H1 (cell line): ENCODE measurements at regions of chr20 and their contacts with region 1.

Region 1: DNA sequence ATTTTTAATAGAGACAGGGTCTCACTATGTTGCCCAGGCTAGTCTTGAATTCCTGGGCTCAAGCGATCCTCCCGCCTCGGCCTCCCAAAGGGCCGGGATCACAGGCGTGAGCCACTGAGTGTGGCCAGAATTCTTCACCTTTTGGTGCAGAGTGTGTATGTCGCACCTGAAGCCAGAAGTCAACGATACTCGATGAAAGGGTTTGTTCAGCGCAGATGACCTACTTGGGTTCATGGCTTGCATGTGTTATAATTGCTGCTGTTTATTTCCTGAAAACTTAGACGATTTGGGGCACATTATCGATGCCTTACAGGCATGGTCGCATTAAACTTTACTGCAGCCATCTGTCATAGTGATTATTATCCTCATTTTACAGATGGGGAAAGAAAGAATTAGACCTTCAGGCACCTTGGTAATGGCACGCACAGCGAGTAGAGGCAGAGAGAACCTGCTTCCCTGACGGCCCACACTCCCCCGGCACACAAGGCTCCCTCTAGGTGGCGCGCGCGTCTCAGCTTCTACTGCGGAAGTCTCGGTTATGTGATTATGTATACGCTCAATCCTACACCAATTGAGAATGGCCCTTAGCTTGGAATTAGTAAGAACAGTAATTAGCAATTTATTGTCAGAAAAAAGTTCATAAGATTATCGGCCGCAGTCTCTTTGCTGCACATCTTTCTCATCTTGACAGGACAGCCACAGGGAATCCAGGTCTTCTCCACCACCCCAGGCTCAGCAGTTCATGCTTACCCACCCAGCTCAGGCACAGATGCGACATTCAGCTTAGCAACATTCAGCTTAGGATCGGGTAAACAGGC is 212.8 kb upstream of the PROKR2 start:
- DNase-seq: peak; percentile 33 to 90
- H3K4me3 ChIP-seq: no peak overlapping the region
- H3K27ac ChIP-seq: no peak overlapping the region
- H3K4me1 ChIP-seq: 0 out of 7 replicates have a peak, but pooled peaks cover 0 to 6% (median 0%) of the 10 kb centered on the region in 4 experiments
- H3K27me3 ChIP-seq: no peaks in the 10 kb centered on the region
- CTCF ChIP-seq: peak; percentile 72 to 98 (median 88)
- EP300 ChIP-seq: no peak
- POLR2A ChIP-seq: no peak
- RAD21 ChIP-seq: peak; percentile 86 to 87

Region 2: GRCh38 chr20:5486377-5487054 is 43.0 kb before region 1 on chr20:
- CTCF ChIA-PET with region 1: no interaction called
- POLR2A ChIA-PET with region 1: no interaction called
- DNase-seq: no peak
- H3K4me3 ChIP-seq: no peak overlapping the region
- H3K27ac ChIP-seq: no peak overlapping the region
- H3K4me1 ChIP-seq: no peaks in the 10 kb centered on the region
- H3K27me3 ChIP-seq: no peaks in the 10 kb centered on the region
- CTCF ChIP-seq: no peak
- EP300 ChIP-seq: no peak
- POLR2A ChIP-seq: no peak
- RAD21 ChIP-seq: no peak

Region 3: GRCh38 chr20:5513975-5514516 is 15.5 kb before region 1 on chr20:
- CTCF ChIA-PET with region 1: interaction called, 19 read pairs
- POLR2A ChIA-PET with region 1: no interaction called
- DNase-seq: no peak
- H3K4me3 ChIP-seq: no peak overlapping the region
- H3K27ac ChIP-seq: no peak overlapping the region
- H3K4me1 ChIP-seq: peaks cover 0 to 6% (median 2%) of the 10 kb centered on the region in 4 experiments; a peak in 3 of 7 replicates
- H3K27me3 ChIP-seq: no peaks in the 10 kb centered on the region
- CTCF ChIP-seq: no peak
- EP300 ChIP-seq: no peak
- POLR2A ChIP-seq: no peak
- RAD21 ChIP-seq: no peak

Region 4: DNA sequence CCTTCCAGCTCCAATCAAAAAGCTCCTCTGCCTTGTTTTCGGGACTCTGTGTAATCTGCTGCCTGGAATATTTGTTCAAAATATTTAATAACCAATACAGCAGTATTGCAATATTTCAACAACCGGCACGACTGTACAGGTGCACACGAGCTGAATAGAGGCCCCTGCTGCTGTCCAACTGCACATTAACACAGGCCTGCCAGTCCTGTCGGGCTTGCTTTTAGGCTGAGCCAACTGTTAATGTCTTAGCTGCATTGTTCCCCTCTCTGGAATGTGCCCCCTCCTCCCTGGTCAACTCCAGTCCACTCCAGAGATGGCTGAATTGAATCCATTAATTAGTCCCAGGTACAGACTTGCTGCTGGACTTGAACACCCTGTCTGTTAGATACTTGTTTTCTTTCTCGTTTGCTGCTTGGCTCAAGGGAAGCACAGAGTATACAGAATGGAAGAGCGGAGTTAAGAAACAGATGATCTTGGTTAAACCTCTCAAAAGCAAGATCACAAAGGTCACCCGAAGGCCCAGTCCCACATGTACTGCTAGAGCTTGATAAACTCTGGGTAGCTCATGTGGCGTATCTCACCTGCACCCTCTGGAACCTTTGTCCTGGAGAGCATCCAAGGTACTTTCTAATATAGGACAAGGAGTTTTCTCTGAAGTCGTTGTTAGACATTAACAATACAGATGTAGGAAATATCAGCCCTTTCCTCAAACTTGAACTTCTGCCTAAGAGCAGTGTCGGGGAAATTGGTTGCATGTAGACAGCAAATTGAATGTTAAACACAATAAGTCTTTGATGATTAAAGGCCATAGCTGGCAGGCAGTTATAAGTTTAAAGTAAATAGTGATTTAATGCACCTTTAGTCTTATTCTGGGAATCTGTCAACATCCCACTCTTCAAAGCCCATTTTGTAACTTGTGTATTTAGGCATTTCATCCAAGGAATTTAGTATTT is 252.5 kb after region 1 on chr20:
- CTCF ChIA-PET with region 1: interaction called, 31 read pairs
- POLR2A ChIA-PET with region 1: no interaction called
- DNase-seq: no peak
- H3K4me3 ChIP-seq: no peak overlapping the region
- H3K27ac ChIP-seq: no peak overlapping the region
- H3K4me1 ChIP-seq: no peaks in the 10 kb centered on the region
- H3K27me3 ChIP-seq: no peaks in the 10 kb centered on the region
- CTCF ChIP-seq: no peak
- EP300 ChIP-seq: no peak
- POLR2A ChIP-seq: no peak
- RAD21 ChIP-seq: no peak

Region 5: DNA sequence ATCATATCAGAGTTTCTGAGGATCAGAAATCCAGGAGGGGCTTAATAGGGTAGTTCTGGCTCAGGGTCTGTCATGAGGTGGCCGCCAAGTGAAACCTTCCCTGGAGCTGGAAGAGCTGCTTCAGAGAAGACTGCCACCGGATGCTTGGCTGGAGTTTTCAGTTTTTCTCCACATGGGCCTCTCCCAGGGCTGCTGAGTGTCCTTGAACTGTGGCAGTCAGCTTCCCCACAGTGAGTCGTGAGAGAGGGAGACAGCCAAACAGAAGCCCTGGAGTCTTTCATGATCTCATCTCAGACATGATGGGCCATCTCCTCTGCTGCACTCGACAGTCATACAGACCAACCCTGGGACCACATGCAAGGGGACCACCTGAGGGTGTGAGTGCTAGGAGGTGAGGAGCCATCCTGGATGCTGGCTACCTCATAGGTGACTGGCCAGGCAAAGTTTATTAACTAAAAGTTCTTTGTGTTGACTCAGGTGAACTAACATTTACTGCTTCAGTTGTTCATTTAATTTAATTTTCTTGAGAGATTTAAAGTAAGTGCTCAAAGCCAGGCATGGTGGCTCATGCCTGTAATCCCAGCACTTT is 292.2 kb after region 1 on chr20:
- CTCF ChIA-PET with region 1: interaction called, 10 read pairs
- POLR2A ChIA-PET with region 1: no interaction called
- DNase-seq: no peak
- H3K4me3 ChIP-seq: no peak overlapping the region
- H3K27ac ChIP-seq: no peak overlapping the region; the same call in 1 of the 2 replicates
- H3K4me1 ChIP-seq: peaks cover 0 to 8% (median 7%) of the 10 kb centered on the region in 4 experiments; a peak in 6 of 7 replicates
- H3K27me3 ChIP-seq: peaks cover 0 to 3% (median 0%) of the 10 kb centered on the region in 4 experiments; a peak in 2 of 7 replicates
- CTCF ChIP-seq: no peak
- EP300 ChIP-seq: no peak
- POLR2A ChIP-seq: no peak
- RAD21 ChIP-seq: no peak

Region 6: GRCh38 chr20:5933802-5934436 is 404.4 kb after region 1 on chr20:
- CTCF ChIA-PET with region 1: interaction called, 37 read pairs
- POLR2A ChIA-PET with region 1: no interaction called
- DNase-seq: no peak
- H3K4me3 ChIP-seq: no peak overlapping the region
- H3K27ac ChIP-seq: no peak overlapping the region
- H3K4me1 ChIP-seq: no peaks in the 10 kb centered on the region
- H3K27me3 ChIP-seq: no peaks in the 10 kb centered on the region
- CTCF ChIP-seq: peak in 2 of 3 experiments; percentile 26 to 44; a peak in 2 of 4 replicates
- EP300 ChIP-seq: no peak
- POLR2A ChIP-seq: no peak
- RAD21 ChIP-seq: peak; percentile 59 to 73